Activated CD4-positive, alpha-beta T cell treated with anti-CD3 and anti-CD28 coated beads, Interleukin-2, amount 10 ng/mL, durations not matched to agents 24 days and 14 days (primary cell): ENCODE measurements at regions of chr18 and their contacts with region 1.

Region 1: DNA sequence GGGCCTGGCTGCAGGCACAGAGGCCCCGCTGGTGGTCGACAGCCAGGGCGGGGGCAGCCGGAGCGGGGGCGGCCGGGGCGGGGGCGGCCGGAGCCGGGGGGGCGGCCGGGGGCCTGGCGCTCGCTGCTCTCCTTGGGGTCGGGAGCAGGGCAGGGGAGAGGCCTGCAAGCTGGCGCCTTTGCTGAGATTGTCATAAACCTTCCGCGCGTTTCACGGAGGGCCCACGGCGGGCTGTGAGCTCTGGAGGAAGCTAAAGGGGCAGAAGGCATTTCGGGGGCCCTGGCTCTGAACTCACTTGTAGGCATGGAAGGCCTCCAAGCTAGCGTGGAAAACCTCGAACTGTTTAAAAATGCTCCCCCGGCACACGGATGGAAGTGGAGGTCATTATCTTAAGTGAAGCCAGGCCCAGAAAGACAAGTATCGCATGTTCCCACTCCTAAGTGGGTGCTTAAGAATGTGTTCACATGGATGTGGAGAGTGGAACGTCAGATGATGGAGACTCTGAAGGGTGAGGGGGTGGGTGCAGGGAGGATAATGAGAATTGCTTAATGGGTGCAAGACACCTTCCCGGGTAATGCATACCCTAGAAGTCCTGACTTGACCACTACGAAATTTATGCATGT is 629 bp downstream of the PRELID3A start:
- DNase-seq: no peak
- H3K4me3 Mint-ChIP-seq: peak overlapping the region; percentile 79
- H3K27ac Mint-ChIP-seq: peak overlapping the region; percentile 72
- H3K4me1 Mint-ChIP-seq: peaks cover 33% of the 10 kb centered on the region
- H3K27me3 Mint-ChIP-seq: peaks cover 35% of the 10 kb centered on the region

Region 2: GRCh38 chr18:12391618-12392165 is 16.7 kb before region 1 on chr18:
- intact Hi-C with region 1: loop called (anchors 1 kb)
- DNase-seq: peak; percentile 85
- H3K4me3 Mint-ChIP-seq: no peak overlapping the region
- H3K27ac Mint-ChIP-seq: no peak overlapping the region
- H3K4me1 Mint-ChIP-seq: no peaks in the 10 kb centered on the region
- H3K27me3 Mint-ChIP-seq: peaks cover 6% of the 10 kb centered on the region

Region 3: GRCh38 chr18:12420831-12421421 is 12.6 kb after region 1 on chr18:
- intact Hi-C with region 1: loop called (anchors 1 kb)
- DNase-seq: no peak
- H3K4me3 Mint-ChIP-seq: peak overlapping the region; percentile 72
- H3K27ac Mint-ChIP-seq: peak overlapping the region; percentile 66
- H3K4me1 Mint-ChIP-seq: peaks cover 9% of the 10 kb centered on the region
- H3K27me3 Mint-ChIP-seq: no peaks in the 10 kb centered on the region